Naive thymus-derived CD4-positive, alpha-beta T cell (primary cell): ENCODE measurements at regions of chr1 and their contacts with region 1.

Region 1: GRCh38 chr1:153447498-153448170 is 12.8 kb downstream of the S100A7 start:
- DNase-seq: no peak
- ATAC-seq: no peak
- H3K4me3 ChIP-seq: no peak overlapping the region
- H3K4me3 Mint-ChIP-seq: no peak overlapping the region
- H3K27ac ChIP-seq: no peak overlapping the region
- H3K27ac Mint-ChIP-seq: no peak overlapping the region
- H3K4me1 ChIP-seq: no peaks in the 10 kb centered on the region
- H3K4me1 Mint-ChIP-seq: no peaks in the 10 kb centered on the region
- H3K27me3 ChIP-seq: peaks cover 6 to 7% of the 10 kb centered on the region in 2 donors
- H3K27me3 Mint-ChIP-seq: peaks cover 21 to 49% (median 45%) of the 10 kb centered on the region in 5 donors

Region 2: GRCh38 chr1:153422450-153423068 is 25.1 kb before region 1 on chr1:
- CTCF ChIA-PET with region 1: no interaction called
- POLR2A ChIA-PET with region 1: no interaction called
- intact Hi-C with region 1: loop called (anchors 1 kb)
- DNase-seq: peak; percentile 24 to 69 (median 58)
- ATAC-seq: peak; percentile 52
- H3K4me3 ChIP-seq: no peak overlapping the region
- H3K4me3 Mint-ChIP-seq: no peak overlapping the region
- H3K27ac ChIP-seq: no peak overlapping the region
- H3K27ac Mint-ChIP-seq: no peak overlapping the region
- H3K4me1 ChIP-seq: no peaks in the 10 kb centered on the region
- H3K4me1 Mint-ChIP-seq: peaks cover 0 to 1% (median 0%) of the 10 kb centered on the region in 7 donors
- H3K27me3 ChIP-seq: no peaks in the 10 kb centered on the region
- H3K27me3 Mint-ChIP-seq: peaks cover 5 to 69% (median 63%) of the 10 kb centered on the region in 5 donors